ENCODE measurements at regions of chr1 and their contacts with region 1.

Region 1: DNA sequence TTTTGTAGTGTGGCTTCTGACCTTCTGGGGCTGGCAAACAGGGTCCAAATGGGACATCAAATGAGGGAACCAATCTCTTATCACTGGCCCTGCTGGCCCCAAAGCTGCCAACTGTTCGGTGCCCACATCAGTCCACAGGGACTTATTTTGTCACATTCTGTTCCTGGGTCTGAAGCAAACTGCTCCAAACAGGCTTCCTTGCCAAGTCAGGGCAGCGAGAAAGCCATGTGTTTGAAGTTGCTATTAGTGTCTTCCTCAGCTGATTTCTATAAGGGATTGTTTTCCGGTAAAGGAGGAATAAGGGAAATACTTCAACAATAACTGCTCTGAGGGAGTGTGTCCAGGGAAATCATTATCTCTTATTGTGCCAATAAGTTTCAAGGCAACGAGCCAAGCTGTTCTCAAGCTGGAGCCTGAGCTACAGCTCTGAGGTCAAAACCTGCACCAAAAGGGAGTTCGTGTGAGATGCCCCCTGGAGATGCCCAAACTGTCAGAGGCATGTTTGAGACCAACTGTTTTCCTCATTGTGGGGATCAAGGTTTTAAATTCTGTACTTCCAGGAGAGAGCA is 381.4 kb upstream of the PROX1 start:
- DNase-seq: no peak
- H3K4me3 ChIP-seq: no peak overlapping the region
- CTCF ChIP-seq: no peak
- POLR2A ChIP-seq: no peak

Region 2: DNA sequence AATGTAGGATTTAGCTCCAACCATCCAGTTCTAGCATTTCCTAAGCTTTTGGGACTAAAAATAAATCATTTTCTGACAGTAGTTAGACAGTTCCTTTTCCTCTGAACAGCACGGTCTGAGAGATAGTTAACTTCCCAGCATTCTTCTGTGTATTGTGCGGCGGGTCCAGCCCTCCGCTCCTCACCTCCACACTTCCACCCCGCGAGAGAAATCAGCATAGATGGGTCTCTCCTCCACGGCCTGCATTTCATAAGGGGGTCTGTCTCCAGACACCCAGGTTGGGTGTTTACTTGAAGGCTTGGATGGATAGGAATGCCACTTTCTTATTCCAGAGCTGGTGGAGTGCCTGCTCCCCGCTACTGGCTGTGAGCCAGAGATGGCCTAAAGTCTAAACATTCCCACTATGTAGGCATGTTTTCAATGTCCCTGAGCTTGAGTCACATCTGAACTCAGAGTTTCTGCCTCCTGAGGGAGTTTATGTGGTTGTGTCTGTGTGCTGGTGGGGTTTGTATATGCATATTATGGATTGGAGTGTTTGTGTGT is 1359.1 kb before region 1 on chr1:
- intact Hi-C with region 1: loop called (anchors 5 kb)
- DNase-seq: peak in 1 of 2 donors; percentile 50
- H3K4me3 ChIP-seq: no peak overlapping the region
- CTCF ChIP-seq: no peak
- POLR2A ChIP-seq: no peak

Region 3: GRCh38 chr1:213661302-213661701 is 55.0 kb after region 1 on chr1:
- intact Hi-C with region 1: no loop called
- DNase-seq: no peak
- H3K4me3 ChIP-seq: no peak overlapping the region
- CTCF ChIP-seq: no peak
- POLR2A ChIP-seq: no peak

Measured in lower leg skin (tissue), 4 donors.